Ascending aorta (tissue), 2 donors: ENCODE measurements at regions of chr19 and their contacts with region 1.

Region 1: GRCh38 chr19:4208385-4209094 is 20.8 kb upstream of the EBI3 start:
- DNase-seq: no peak
- H3K4me3 ChIP-seq: no peak overlapping the region
- H3K27ac ChIP-seq: no peak overlapping the region
- H3K4me1 ChIP-seq: no peaks in the 10 kb centered on the region
- H3K27me3 ChIP-seq: no peaks in the 10 kb centered on the region
- CTCF ChIP-seq: no peak

Region 2: GRCh38 chr19:4139614-4140236 is 68.8 kb before region 1 on chr19:
- intact Hi-C with region 1: loop called (anchors 10 kb)
- DNase-seq: peak; percentile 15 to 82
- H3K4me3 ChIP-seq: no peak overlapping the region
- H3K27ac ChIP-seq: no peak overlapping the region
- H3K4me1 ChIP-seq: no peaks in the 10 kb centered on the region
- H3K27me3 ChIP-seq: no peaks in the 10 kb centered on the region
- CTCF ChIP-seq: peak; percentile 55 to 66 (median 65)